ENCODE measurements at regions of chr2 and their contacts with region 1.

Region 1: GRCh38 chr2:189580658-189581353 is at the start of gene SLC40A1:
- DNase-seq: peak; percentile 86 to 94 (median 88)
- H3K4me3 ChIP-seq: peak within 1 kb of the TSS; percentile 38 to 97 (median 84)
- H3K27ac ChIP-seq: peak within 1 kb of the TSS; percentile 83 to 96 (median 89)
- H3K4me1 ChIP-seq: peaks cover 13 to 38% of the 10 kb centered on the region in 2 donors
- H3K27me3 ChIP-seq: no peaks in the 10 kb centered on the region
- CTCF ChIP-seq: peak in 1 of 6 experiments; percentile 6
- POLR2A ChIP-seq: peak; percentile 96 to 98
- total RNA-seq, gene SLC40A1: 84.1 to 3,561 (median 1,079) TPM

Region 2: DNA sequence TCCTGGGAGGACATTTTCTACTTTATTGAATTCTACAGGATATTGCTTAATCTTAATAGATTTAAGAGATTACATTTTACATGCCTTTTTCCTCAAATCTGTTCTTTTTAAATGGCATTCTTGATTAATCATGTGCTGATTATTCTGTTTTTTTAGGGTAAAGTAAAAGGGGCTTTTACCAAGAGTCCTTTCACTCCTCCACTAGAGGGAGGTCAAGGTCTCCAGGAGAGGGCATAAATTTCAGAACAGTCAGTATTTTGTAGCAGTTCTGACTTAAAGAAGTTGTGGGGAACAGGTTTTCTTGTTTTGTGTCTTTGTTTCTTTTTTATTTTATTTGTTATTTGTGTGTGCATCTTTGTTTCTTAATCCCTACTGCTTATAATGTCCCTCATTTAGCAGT is 114.1 kb before region 1 on chr2:
- intact Hi-C with region 1: loop called in 1 of 2 experiments (anchors 5 kb)
- DNase-seq: peak in 2 of 7 donors; percentile 7 to 19
- H3K4me3 ChIP-seq: no peak overlapping the region
- H3K27ac ChIP-seq: no peak overlapping the region
- H3K4me1 ChIP-seq: peaks cover 26 to 40% of the 10 kb centered on the region in 2 donors
- H3K27me3 ChIP-seq: no peaks in the 10 kb centered on the region
- CTCF ChIP-seq: peak; percentile 25 to 74 (median 63)
- POLR2A ChIP-seq: no peak

Region 3: DNA sequence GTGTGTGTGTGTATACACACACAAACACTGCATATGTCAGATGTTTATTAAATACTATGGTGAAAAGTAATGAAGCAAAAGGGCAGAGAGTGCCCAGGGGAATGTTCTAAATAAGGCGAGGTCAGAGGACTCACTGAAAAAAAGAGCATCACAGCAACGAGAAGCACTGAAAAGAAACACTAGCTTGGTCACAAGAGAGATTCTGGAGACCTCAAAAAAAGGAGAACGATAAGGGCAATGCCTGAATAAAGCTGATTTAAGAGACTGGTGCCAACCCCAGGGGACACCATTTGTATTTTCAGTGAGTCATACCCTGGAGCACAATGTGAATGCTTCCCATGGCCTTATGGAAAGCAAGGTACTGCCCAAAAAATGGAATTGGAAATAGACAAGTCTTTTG is 14.8 kb before region 1 on chr2:
- intact Hi-C with region 1: loop called in 1 of 2 experiments (anchors 2 kb)
- DNase-seq: peak in 1 of 7 donors; percentile 24
- H3K4me3 ChIP-seq: peak overlapping the region in 1 of 4 donors; percentile 21
- H3K27ac ChIP-seq: peak overlapping the region in 3 of 5 donors; percentile 21 to 61 (median 36)
- H3K4me1 ChIP-seq: peaks cover 76 to 94% of the 10 kb centered on the region in 2 donors
- H3K27me3 ChIP-seq: no peaks in the 10 kb centered on the region
- CTCF ChIP-seq: no peak
- POLR2A ChIP-seq: no peak

Region 4: DNA sequence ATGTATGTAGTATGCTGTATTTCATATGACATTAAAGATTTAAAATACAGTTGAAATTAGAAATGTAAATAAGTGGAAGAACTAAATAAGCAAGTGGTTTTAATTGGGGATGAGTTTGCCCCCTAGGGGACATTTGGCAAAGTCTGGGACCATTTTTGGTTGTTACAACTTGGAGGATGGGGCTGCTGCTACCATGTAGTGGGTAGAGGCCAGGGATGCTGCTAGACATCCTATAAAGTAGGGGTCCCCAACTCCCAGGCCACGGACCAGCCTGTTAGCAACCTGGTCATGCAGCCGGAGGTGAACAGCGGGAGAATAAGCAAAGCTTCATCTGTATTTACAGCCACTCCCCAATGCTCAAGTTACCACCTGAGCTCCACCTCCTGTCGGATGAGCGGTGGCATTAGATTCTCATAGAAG is 52.6 kb after region 1 on chr2:
- intact Hi-C with region 1: loop called (anchors 10 kb)
- DNase-seq: peak in 5 of 7 donors; percentile 27 to 44 (median 37)
- H3K4me3 ChIP-seq: no peak overlapping the region
- H3K27ac ChIP-seq: no peak overlapping the region
- H3K4me1 ChIP-seq: peaks cover 0 to 5% of the 10 kb centered on the region in 2 donors
- H3K27me3 ChIP-seq: no peaks in the 10 kb centered on the region
- CTCF ChIP-seq: peak; percentile 31 to 59 (median 48)
- POLR2A ChIP-seq: no peak